MCF 10A (cell line): ENCODE measurements at regions of chr13 and their contacts with region 1.

Region 1: GRCh38 chr13:35994131-35994966 is 136.8 kb downstream of the DCLK1 start:
- DNase-seq: peak; percentile 96
- H3K4me3 Mint-ChIP-seq: no peak overlapping the region
- H3K27ac Mint-ChIP-seq: peak overlapping the region; percentile 82
- H3K4me1 Mint-ChIP-seq: peaks cover 31% of the 10 kb centered on the region
- H3K27me3 Mint-ChIP-seq: no peaks in the 10 kb centered on the region
- CTCF ChIP-seq: no peak

Region 2: DNA sequence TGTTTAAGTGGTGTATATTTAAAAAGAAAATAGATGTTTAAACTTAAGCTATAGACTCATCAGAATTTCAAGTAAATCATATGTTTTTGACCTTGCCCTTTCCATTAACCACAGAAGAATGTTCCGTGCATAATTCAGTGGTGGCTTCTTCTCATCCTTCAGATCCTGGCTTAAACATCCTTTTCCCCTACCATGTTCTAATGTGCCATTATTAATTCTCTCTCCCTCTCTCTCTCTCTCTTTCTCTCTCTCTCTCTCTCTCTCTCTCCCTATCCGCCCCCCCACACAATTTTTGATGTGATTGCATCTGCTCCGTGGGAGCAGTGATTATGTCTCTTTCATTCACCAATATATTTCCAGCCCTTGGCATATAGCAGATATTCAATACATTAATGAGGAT is 20.4 kb after region 1 on chr13:
- CTCF ChIA-PET with region 1: no interaction called
- POLR2A ChIA-PET with region 1: no interaction called
- intact Hi-C with region 1: no loop called
- DNase-seq: no peak
- H3K4me3 Mint-ChIP-seq: no peak overlapping the region
- H3K27ac Mint-ChIP-seq: no peak overlapping the region
- H3K4me1 Mint-ChIP-seq: no peaks in the 10 kb centered on the region
- H3K27me3 Mint-ChIP-seq: no peaks in the 10 kb centered on the region
- CTCF ChIP-seq: no peak

Region 3: DNA sequence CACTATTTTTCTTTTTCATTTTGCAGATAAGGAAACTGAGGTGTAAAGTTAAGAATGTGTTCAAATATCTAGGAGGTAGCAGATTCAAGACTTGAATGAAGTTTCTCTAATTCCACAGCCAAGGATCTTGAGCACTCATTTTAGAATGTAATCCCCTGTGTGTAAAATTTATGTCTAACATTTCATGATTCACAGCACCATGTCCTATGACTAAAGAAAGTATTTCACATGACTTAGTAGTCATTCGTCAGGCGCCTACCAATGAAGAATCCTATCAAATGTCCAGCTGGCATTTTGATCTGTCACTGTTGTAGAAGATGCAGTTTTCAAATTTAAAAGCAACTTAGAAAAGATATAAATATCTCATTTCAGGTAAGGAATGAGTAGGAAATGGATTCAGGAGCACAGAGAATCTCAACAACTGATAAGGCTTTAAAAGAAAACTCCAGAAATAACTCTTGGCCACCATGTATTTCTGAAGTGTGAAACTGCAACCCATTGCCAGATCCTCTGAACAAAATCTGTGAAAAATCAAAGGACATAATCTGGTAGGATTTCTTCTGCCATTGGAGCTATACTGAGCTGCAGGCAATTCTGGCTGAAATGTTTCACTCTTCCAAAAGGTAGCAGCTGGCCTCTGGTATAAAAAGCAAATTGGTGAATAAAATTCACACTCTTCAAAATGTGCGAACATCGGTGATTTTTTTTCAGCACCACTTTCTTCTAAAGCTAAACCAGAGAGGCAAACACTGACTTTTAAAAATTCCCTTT is 44.6 kb after region 1 on chr13:
- CTCF ChIA-PET with region 1: no interaction called
- POLR2A ChIA-PET with region 1: no interaction called
- intact Hi-C with region 1: loop called (anchors 5 kb)
- DNase-seq: no peak
- H3K4me3 Mint-ChIP-seq: no peak overlapping the region
- H3K27ac Mint-ChIP-seq: no peak overlapping the region
- H3K4me1 Mint-ChIP-seq: no peaks in the 10 kb centered on the region
- H3K27me3 Mint-ChIP-seq: no peaks in the 10 kb centered on the region
- CTCF ChIP-seq: no peak